Lower lobe of right lung (tissue), 2 donors: ENCODE measurements at regions of chr6 and their contacts with region 1.

Region 1: DNA sequence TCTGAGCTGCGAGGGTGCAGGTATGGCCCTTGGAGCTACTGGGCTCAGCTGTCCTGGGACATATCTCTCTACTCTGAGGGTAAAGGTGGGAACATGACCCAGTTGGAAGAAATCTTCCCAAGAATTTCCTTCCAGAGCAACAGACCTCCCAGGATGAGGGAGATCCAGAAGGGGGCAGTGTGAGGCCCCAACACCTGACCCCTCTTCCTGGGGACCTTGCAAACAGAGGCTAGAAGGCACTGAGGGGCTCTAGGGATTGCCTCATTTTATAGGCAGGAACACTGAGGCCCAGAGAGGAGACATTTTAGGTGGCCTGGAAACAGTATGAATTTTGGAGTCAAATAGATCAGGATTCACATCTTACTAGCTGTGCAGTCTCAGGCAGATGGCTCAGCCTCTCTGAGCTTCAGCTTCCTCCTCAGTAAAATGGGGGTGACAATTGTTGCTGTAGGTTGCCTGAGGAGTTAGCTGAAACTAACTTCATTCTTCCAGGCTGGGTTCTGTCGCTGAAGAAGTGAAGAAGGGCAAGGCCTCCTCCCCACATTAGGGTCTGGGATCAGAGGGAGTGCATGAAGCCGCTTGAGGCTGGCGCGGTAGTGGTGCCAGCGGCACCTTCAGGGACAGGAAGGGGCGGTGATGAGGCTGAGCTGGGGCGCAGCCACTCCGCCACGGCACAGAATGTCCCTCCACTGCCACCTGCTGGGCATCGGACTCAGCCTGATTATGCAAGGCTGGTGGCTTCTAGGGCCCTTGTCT is 11.4 kb downstream of the KCNK17 start:
- DNase-seq: peak; percentile 90
- ATAC-seq: peak; percentile 93 to 94
- H3K4me3 ChIP-seq: no peak overlapping the region
- H3K27ac ChIP-seq: no peak overlapping the region
- H3K4me1 ChIP-seq: no peaks in the 10 kb centered on the region
- H3K27me3 ChIP-seq: no peaks in the 10 kb centered on the region
- CTCF ChIP-seq: peak; percentile 92

Region 2: GRCh38 chr6:38871741-38872568 is 430.9 kb before region 1 on chr6:
- intact Hi-C with region 1: no loop called
- DNase-seq: no peak
- ATAC-seq: peak; percentile 76
- H3K4me3 ChIP-seq: no peak overlapping the region
- H3K27ac ChIP-seq: no peak overlapping the region
- H3K4me1 ChIP-seq: peaks cover 5% of the 10 kb centered on the region
- H3K27me3 ChIP-seq: no peaks in the 10 kb centered on the region
- CTCF ChIP-seq: peak; percentile 88

Region 3: DNA sequence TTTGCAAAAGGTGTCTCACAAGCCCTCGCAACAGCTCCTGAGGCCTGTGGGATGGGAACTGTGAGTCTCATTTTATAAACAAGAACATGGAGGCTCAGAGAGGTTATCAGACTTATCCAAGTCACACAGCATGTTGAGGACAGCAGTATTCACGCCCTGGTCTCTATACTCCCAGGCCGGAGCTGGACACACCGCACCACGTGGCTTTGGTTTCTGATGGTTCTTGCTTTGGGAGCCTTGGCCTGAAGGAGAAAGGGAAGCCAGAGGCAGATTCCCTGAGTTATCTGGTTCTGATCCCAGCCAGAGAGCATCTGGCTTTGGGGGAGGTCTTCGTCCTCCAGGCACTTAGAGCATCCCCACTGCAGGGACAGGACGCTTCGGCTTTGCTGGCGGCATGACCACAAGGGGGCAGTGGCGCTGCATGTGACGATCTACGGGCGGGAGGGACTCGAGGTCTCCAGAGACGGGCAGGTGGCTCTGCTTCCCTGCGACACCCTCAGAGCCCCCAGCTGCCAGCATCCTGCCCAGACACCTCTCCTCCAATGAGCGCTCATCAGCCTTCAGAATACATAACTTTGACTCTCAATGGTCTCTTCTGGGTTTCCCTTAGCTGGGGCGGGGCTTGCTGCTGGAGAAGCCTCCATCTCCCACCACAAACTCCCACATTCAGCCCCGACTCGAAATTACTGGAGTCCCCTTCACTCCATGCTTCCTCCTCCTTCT is 136.5 kb before region 1 on chr6:
- intact Hi-C with region 1: loop called (anchors 2 kb)
- DNase-seq: peak; percentile 84
- ATAC-seq: peak; percentile 86 to 88
- H3K4me3 ChIP-seq: no peak overlapping the region
- H3K27ac ChIP-seq: no peak overlapping the region
- H3K4me1 ChIP-seq: peaks cover 3% of the 10 kb centered on the region
- H3K27me3 ChIP-seq: no peaks in the 10 kb centered on the region
- CTCF ChIP-seq: peak; percentile 91

Region 4: GRCh38 chr6:39239527-39240154 is 63.2 kb before region 1 on chr6:
- intact Hi-C with region 1: no loop called
- DNase-seq: no peak
- ATAC-seq: no peak
- H3K4me3 ChIP-seq: no peak overlapping the region
- H3K27ac ChIP-seq: no peak overlapping the region
- H3K4me1 ChIP-seq: no peaks in the 10 kb centered on the region
- H3K27me3 ChIP-seq: no peaks in the 10 kb centered on the region
- CTCF ChIP-seq: no peak